B cell (primary cell): ENCODE measurements at regions of chr6 and their contacts with region 1.

Region 1: DNA sequence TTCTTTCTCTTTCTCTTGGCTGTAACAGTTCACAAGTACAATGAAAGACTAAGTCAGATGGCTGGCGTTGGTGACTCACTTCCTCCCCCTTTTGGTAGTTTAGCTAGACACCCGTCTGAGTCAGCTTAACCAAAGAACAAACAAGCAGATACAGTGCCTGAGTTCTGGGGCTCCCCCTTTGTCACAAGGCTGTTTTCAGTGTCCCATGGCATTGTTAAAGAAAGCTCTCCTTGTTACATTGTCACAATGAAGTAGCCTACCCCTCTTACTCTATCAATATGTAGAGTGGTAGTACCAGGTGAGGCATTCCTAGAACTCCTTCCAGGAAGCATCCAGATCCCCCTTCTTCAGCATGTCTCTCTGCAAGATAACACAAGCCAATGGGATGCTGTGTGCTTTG is 38.6 kb downstream of the KIAA0408 start:
- DNase-seq: peak; percentile 75
- ATAC-seq: peak; percentile 96
- H3K4me3 ChIP-seq: no peak overlapping the region
- H3K4me3 Mint-ChIP-seq: no peak overlapping the region
- H3K27ac ChIP-seq: no peak overlapping the region
- H3K27ac Mint-ChIP-seq: peak overlapping the region; percentile 12
- H3K4me1 ChIP-seq: peaks cover 13 to 17% of the 10 kb centered on the region in 2 donors
- H3K4me1 Mint-ChIP-seq: peaks cover 21% of the 10 kb centered on the region
- H3K27me3 ChIP-seq: no peaks in the 10 kb centered on the region
- H3K27me3 Mint-ChIP-seq: no peaks in the 10 kb centered on the region
- CTCF ChIP-seq: peak; percentile 69

Region 2: GRCh38 chr6:127342946-127343808 is 77.4 kb before region 1 on chr6 and contains the start of gene ECHDC1:
- CTCF ChIA-PET with region 1: interaction called, 5 read pairs
- POLR2A ChIA-PET with region 1: no interaction called
- intact Hi-C with region 1: loop called (anchors 1 kb)
- DNase-seq: peak; percentile 80
- ATAC-seq: peak; percentile 69
- H3K4me3 ChIP-seq: peak within 1 kb of the TSS; percentile 70 to 97 (median 94)
- H3K4me3 Mint-ChIP-seq: no peak within 1 kb of the TSS
- H3K27ac ChIP-seq: peak within 1 kb of the TSS; percentile 63 to 77
- H3K27ac Mint-ChIP-seq: no peak within 1 kb of the TSS
- H3K4me1 ChIP-seq: peaks cover 37 to 47% of the 10 kb centered on the region in 2 donors
- H3K4me1 Mint-ChIP-seq: peaks cover 24% of the 10 kb centered on the region
- H3K27me3 ChIP-seq: no peaks in the 10 kb centered on the region
- H3K27me3 Mint-ChIP-seq: no peaks in the 10 kb centered on the region
- CTCF ChIP-seq: no peak
- total RNA-seq, gene ECHDC1: 60.0 and 60.5 TPM in 2 replicates

Region 3: DNA sequence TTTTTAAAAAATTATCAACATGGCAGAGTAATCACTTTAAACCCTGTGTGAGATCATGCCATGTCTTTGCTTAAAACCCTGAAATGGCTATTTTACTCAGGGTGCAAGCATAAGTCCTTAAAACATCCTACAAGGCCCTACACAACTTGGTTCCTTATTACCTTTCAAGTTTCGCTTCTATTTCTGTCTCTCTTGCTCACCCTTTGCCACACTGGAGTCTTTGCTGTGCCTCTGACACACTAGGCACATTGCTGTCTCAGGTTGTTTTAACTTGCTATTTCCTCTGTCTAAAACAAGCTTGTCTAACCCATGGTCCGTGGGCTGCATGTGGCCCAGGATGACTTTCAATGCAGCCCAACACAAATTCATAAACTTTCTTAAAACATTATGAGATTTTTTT is 16.9 kb before region 1 on chr6:
- CTCF ChIA-PET with region 1: no interaction called
- POLR2A ChIA-PET with region 1: no interaction called
- intact Hi-C with region 1: no loop called
- DNase-seq: no peak
- ATAC-seq: no peak
- H3K4me3 ChIP-seq: no peak overlapping the region
- H3K4me3 Mint-ChIP-seq: no peak overlapping the region
- H3K27ac ChIP-seq: no peak overlapping the region
- H3K27ac Mint-ChIP-seq: no peak overlapping the region
- H3K4me1 ChIP-seq: peaks cover 6 to 9% of the 10 kb centered on the region in 2 donors
- H3K4me1 Mint-ChIP-seq: peaks cover 16% of the 10 kb centered on the region
- H3K27me3 ChIP-seq: no peaks in the 10 kb centered on the region
- H3K27me3 Mint-ChIP-seq: no peaks in the 10 kb centered on the region
- CTCF ChIP-seq: no peak